Activated naive CD4-positive, alpha-beta T cell treated with anti-CD3 and anti-CD28 coated beads for 36 hours (primary cell): ENCODE measurements at regions of chr4 and their contacts with region 1.

Region 1: DNA sequence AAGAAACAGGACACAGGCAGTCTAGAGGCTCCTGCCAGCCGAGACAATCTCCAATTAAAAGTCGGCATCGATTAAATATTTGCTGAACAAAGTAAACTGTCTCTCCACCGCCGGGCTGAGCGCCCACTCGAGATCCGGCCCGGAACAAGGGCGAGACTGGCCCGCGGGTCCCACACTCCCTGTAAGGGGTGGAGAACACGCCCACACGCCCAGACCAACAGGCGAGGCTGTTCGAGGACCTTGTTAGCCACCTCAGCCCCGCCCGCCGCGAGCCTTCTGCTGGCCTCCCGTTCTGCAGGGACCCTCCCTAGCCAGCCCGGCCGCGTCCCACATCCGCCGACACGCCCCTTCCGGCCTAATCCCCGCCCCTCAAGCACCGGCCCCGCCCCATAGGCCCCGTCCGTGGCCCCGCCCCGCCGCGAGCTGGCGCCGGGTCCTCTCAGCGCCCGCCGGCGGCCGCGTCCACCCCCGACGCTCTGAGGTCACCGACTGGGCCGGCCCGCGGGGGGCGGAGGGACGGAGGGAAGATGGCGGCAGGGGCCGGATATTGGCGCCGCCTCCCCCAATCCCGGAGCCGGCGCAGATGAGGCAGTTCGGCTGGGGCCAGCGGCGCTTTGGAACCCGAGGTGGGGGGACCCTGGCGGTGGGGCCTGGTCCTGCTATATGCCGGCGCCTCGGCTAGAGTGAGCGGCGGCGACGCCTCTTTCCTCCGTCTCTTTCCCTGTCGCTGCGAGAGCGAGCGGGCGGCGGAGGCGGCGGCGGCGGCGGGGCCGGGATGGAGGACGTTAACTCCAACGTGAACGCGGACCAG is at the start of gene SLAIN2:
- DNase-seq: peak; percentile 98
- H3K4me3 Mint-ChIP-seq: peak within 1 kb of the TSS; percentile 97
- H3K27ac Mint-ChIP-seq: peak within 1 kb of the TSS; percentile 97
- H3K4me1 Mint-ChIP-seq: peaks cover 62% of the 10 kb centered on the region
- H3K27me3 Mint-ChIP-seq: no peaks in the 10 kb centered on the region
- total RNA-seq, gene SLAIN2: 39.7 to 42.6 TPM

Region 2: GRCh38 chr4:47463235-47463956 is 877.8 kb before region 1 on chr4 and contains the start of gene COMMD8:
- CTCF ChIA-PET with region 1: no interaction called
- intact Hi-C with region 1: loop called (anchors 1 kb)
- DNase-seq: peak; percentile 98
- H3K4me3 Mint-ChIP-seq: peak within 1 kb of the TSS; percentile 81
- H3K27ac Mint-ChIP-seq: peak within 1 kb of the TSS; percentile 60
- H3K4me1 Mint-ChIP-seq: peaks cover 27% of the 10 kb centered on the region
- H3K27me3 Mint-ChIP-seq: no peaks in the 10 kb centered on the region
- total RNA-seq, gene COMMD8: 29.0 to 29.6 TPM

Region 3: DNA sequence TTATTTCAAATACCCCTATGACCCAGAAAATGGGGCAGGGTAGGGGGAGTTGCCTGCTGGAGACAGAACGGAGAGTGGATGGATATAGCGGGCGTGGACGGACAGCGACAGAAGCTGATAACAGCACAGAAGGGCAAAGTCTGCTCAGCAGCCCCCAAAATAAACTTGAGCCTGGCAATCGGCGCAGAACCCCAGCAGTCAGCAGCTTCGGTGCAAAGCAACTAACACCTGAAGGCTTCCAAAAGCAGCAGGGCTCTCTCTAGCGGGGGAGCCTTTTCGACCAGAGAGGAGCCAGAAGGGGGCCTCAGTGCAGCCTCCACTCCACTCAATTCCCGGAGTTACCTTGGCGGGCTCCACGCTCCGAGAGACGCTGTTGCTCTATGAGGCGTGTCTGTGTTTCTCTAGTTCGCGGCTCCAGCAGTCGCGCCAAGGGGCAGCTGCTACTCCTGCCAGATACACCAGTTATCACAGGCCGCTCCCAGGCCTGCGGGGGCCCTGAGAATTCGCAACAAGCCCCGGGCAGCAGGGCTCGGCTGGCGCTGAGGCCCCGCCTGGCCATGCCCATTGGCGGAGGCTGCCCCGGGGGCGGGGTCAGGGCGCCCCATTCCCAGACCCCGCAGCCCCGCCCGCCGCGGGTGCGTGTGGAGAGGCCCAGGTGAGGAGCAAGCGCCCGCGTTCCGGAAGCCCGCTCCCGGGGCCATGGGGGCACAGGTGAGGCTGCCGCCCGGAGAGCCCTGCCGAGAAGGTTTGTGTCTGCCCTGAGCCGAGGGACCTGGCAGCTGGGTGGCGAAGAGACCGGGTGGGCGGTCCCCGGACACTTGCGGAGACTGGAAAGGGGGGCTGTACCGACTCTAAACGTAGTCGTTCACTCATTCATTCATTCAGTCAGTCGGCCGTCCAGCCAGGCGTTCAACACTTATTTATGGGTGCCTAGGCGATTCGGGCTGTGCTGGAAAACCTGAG is 324.7 kb before region 1 on chr4 and contains the starts of genes CNGA1 and NIPAL1:
- CTCF ChIA-PET with region 1: no interaction called
- intact Hi-C with region 1: loop called (anchors 5 kb)
- DNase-seq: peak; percentile 72
- H3K4me3 Mint-ChIP-seq: peak within 1 kb of the TSS; percentile 81
- H3K27ac Mint-ChIP-seq: peak within 1 kb of the TSS; percentile 46
- H3K4me1 Mint-ChIP-seq: peaks cover 26% of the 10 kb centered on the region
- H3K27me3 Mint-ChIP-seq: peaks cover 5% of the 10 kb centered on the region
- total RNA-seq, gene CNGA1: 0.26 to 0.94 TPM
- total RNA-seq, gene NIPAL1: 1.0 to 2.0 TPM

Region 4: DNA sequence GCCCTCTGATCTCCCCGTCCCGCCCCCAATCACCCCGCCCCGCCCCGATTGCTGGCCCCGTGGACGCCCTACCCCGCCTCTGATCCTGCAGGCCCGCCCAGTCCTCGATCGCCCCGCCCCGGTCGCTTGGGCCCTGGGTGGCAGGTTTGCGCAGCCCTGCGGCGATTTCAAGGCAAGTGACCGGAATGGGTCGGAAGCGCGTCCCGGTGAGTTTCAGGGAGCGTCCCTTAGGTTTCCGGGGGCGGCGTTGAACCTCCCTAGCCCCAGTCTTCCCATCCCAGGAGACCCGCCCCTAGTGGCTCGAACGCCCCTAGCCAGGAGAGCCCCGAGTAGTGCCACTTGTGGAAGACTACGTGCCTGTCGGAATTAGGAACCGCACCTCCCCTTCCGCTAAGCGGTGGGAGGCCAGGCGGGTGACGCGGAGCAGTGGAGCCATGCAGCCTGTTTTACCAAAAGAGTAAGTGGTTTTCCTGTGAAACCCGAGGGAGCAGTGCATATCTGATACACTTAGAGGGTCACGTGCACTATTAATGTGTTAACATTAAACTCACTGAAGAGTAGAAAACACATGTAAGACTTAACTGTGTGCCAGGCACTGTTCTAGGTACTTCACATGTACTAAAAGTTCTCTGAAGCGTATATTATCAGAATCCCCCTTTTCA is 71.2 kb before region 1 on chr4:
- CTCF ChIA-PET with region 1: interaction called, 4 read pairs
- intact Hi-C with region 1: loop called (anchors 1 kb)
- DNase-seq: peak; percentile 93
- H3K4me3 Mint-ChIP-seq: peak overlapping the region; percentile 93
- H3K27ac Mint-ChIP-seq: peak overlapping the region; percentile 83
- H3K4me1 Mint-ChIP-seq: peaks cover 9% of the 10 kb centered on the region
- H3K27me3 Mint-ChIP-seq: no peaks in the 10 kb centered on the region

Region 5: GRCh38 chr4:48329976-48330375 is 11.2 kb before region 1 on chr4:
- CTCF ChIA-PET with region 1: interaction called, 3 read pairs
- intact Hi-C with region 1: loop called (anchors 1 kb)
- DNase-seq: no peak
- H3K4me3 Mint-ChIP-seq: no peak overlapping the region
- H3K27ac Mint-ChIP-seq: no peak overlapping the region
- H3K4me1 Mint-ChIP-seq: peaks cover 8% of the 10 kb centered on the region
- H3K27me3 Mint-ChIP-seq: peaks cover 5% of the 10 kb centered on the region

Region 6: DNA sequence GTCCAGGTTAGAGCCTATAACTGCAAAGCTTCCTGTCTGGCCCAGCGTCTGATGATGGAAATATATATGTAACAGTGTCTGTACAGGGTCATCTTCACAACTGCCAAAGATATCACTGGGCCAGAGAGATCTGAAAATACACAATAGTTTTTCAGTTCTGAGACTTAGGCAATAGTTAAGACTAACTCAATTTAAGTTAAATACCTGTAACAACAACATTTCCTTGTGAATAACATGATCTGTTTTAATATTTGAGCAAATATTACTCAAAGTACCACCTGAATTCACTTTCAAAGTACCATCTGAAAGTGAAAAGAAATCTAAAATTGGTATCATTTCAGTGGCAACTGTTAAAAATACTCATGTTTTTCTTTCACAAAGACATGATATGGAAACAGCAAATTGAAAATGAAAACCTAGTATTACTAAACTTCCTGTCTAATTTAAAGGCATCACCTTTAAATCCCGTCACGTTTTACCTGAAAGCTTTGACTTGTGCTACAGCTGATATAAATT is 158.4 kb after region 1 on chr4:
- CTCF ChIA-PET with region 1: interaction called, 5 read pairs
- intact Hi-C with region 1: loop called (anchors 1 kb)
- DNase-seq: no peak
- H3K4me3 Mint-ChIP-seq: no peak overlapping the region
- H3K27ac Mint-ChIP-seq: no peak overlapping the region
- H3K4me1 Mint-ChIP-seq: peaks cover 16% of the 10 kb centered on the region
- H3K27me3 Mint-ChIP-seq: no peaks in the 10 kb centered on the region

Region 7: DNA sequence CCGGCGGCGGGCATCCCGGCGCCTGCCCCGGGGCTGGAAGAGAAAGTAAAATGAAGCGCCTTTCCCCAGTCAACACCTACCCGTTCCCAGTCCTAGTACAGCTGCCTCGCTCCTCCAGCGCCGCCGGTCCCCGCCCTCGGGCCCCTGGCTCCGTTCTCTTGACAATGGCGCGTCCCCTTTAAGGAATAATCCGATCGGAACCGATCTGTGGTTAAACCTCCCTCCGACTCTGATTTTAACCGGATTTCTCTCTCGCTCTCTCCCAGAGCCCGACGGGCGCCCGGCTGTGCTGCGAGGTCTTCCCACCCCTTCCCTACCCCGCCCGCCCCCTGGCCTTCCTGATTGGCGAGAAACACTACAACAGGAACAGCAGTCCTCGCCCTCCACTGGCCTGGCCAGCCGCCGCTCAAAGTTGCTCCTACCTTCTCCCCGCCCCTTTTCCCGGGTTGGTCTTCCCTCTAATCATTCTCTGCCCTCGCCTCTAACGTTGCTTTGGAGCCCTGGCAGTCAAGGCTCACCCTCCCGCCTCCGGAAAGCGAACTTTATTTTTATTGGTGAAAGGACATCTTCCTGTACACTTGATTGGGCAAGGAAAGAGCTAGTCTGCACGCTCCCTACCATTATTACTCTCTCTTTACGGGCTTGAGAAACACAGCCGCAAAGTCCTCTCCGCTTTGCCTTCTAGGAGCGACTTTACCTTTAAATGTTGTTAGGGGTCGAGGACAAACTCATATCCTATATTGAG is 439.0 kb after region 1 on chr4 and contains the start of gene FRYL:
- CTCF ChIA-PET with region 1: no interaction called
- intact Hi-C with region 1: loop called (anchors 1 kb)
- DNase-seq: peak; percentile 100
- H3K4me3 Mint-ChIP-seq: peak within 1 kb of the TSS; percentile 92
- H3K27ac Mint-ChIP-seq: peak within 1 kb of the TSS; percentile 98
- H3K4me1 Mint-ChIP-seq: peaks cover 41% of the 10 kb centered on the region
- H3K27me3 Mint-ChIP-seq: no peaks in the 10 kb centered on the region
- total RNA-seq, gene FRYL: 44.8 to 54.2 TPM